Activated CD8-positive, alpha-beta T cell treated with anti-CD3 and anti-CD28 coated beads, Interleukin-2, amount 10 ng/mL, durations not matched to agents 7 days and 5 days (primary cell): ENCODE measurements at regions of chr3 and their contacts with region 1.

Region 1: GRCh38 chr3:57397175-57398026 is 104.9 kb upstream of the ASB14 start:
- DNase-seq: peak; percentile 77
- ATAC-seq: peak; percentile 99
- H3K4me3 Mint-ChIP-seq: no peak overlapping the region
- H3K27ac Mint-ChIP-seq: peak overlapping the region; percentile 21
- H3K4me1 Mint-ChIP-seq: peaks cover 17% of the 10 kb centered on the region
- H3K27me3 Mint-ChIP-seq: peaks cover 17% of the 10 kb centered on the region

Region 2: GRCh38 chr3:57169872-57170623 is 227.4 kb before region 1 on chr3:
- CTCF ChIA-PET with region 1: interaction called, 15 read pairs
- POLR2A ChIA-PET with region 1: no interaction called
- DNase-seq: peak; percentile 74
- ATAC-seq: peak; percentile 87
- H3K4me3 Mint-ChIP-seq: peak overlapping the region; percentile 61
- H3K27ac Mint-ChIP-seq: no peak overlapping the region
- H3K4me1 Mint-ChIP-seq: peaks cover 4% of the 10 kb centered on the region
- H3K27me3 Mint-ChIP-seq: peaks cover 53% of the 10 kb centered on the region

Region 3: DNA sequence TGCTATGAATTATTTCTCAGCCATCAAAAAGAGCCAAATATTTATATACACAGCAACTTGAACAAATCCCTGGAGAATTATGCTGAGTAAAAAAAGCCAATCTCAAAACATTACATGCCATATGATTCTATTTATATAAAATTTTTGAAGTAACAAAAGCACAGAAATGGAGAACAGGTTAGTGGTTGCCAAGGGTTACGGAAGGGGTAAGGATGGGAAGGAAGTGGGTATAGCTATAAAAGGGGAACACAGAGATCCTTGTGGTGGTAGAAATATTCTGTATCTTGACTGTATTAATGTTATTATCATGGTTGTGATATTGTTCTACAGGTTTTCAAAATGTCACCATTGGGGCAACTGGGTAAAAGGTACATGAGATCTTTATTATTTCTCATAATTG is 42.6 kb before region 1 on chr3:
- CTCF ChIA-PET with region 1: no interaction called
- POLR2A ChIA-PET with region 1: no interaction called
- DNase-seq: no peak
- ATAC-seq: no peak
- H3K4me3 Mint-ChIP-seq: no peak overlapping the region
- H3K27ac Mint-ChIP-seq: no peak overlapping the region
- H3K4me1 Mint-ChIP-seq: peaks cover 6% of the 10 kb centered on the region
- H3K27me3 Mint-ChIP-seq: no peaks in the 10 kb centered on the region

Region 4: GRCh38 chr3:57370341-57370740 is 27.1 kb before region 1 on chr3:
- CTCF ChIA-PET with region 1: no interaction called
- POLR2A ChIA-PET with region 1: no interaction called
- DNase-seq: no peak
- ATAC-seq: no peak
- H3K4me3 Mint-ChIP-seq: no peak overlapping the region
- H3K27ac Mint-ChIP-seq: no peak overlapping the region
- H3K4me1 Mint-ChIP-seq: no peaks in the 10 kb centered on the region
- H3K27me3 Mint-ChIP-seq: peaks cover 13% of the 10 kb centered on the region

Region 5: DNA sequence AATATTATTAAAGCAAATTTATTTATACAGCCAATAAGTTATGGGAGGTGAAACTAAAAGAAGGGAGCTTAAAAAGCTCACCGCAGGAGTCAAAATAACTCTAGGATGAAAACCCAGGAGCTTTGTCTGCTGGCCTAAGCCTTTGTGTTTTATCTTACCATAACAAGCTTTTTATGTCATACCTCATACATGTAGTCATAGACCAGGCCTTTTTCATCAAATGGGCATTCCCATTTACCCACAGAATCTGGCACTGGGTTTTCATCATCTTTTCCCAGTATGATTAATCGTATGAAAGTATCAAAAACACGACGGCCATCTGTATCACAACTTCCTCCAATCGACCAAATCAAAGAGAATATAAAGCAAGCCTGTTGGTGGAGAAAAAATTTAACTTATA is 23.9 kb after region 1 on chr3:
- CTCF ChIA-PET with region 1: interaction called, 18 read pairs
- POLR2A ChIA-PET with region 1: no interaction called
- DNase-seq: no peak
- ATAC-seq: no peak
- H3K4me3 Mint-ChIP-seq: no peak overlapping the region
- H3K27ac Mint-ChIP-seq: no peak overlapping the region
- H3K4me1 Mint-ChIP-seq: no peaks in the 10 kb centered on the region
- H3K27me3 Mint-ChIP-seq: peaks cover 11% of the 10 kb centered on the region

Region 6: GRCh38 chr3:57826245-57826951 is 429.0 kb after region 1 on chr3:
- CTCF ChIA-PET with region 1: interaction called, 14 read pairs
- POLR2A ChIA-PET with region 1: no interaction called
- DNase-seq: no peak
- ATAC-seq: no peak
- H3K4me3 Mint-ChIP-seq: no peak overlapping the region
- H3K27ac Mint-ChIP-seq: no peak overlapping the region
- H3K4me1 Mint-ChIP-seq: peaks cover 3% of the 10 kb centered on the region
- H3K27me3 Mint-ChIP-seq: no peaks in the 10 kb centered on the region